WTC11 (cell line): ENCODE measurements at regions of chr11 and their contacts with region 1.

Region 1: GRCh38 chr11:86938900-86939880 is 16.0 kb downstream of the FZD4 start:
- DNase-seq: no peak
- ATAC-seq: peak; percentile 49
- H3K4me3 Mint-ChIP-seq: no peak overlapping the region
- H3K27ac Mint-ChIP-seq: peak overlapping the region; percentile 86; the same call in 1 of the 2 replicates
- H3K4me1 Mint-ChIP-seq: peaks cover 40% of the 10 kb centered on the region
- H3K27me3 Mint-ChIP-seq: no peaks in the 10 kb centered on the region
- CTCF ChIP-seq: peak; percentile 55

Region 2: GRCh38 chr11:86919557-86920210 is 19.5 kb before region 1 on chr11:
- CTCF ChIA-PET with region 1: interaction called, 18 read pairs
- POLR2A ChIA-PET with region 1: no interaction called
- DNase-seq: peak; percentile 15
- ATAC-seq: peak; percentile 66
- H3K4me3 Mint-ChIP-seq: no peak overlapping the region
- H3K27ac Mint-ChIP-seq: peak overlapping the region; percentile 29; the same call in 1 of the 2 replicates
- H3K4me1 Mint-ChIP-seq: peaks cover 29% of the 10 kb centered on the region
- H3K27me3 Mint-ChIP-seq: no peaks in the 10 kb centered on the region; the same call in 1 of the 2 replicates
- CTCF ChIP-seq: peak; percentile 52

Region 3: DNA sequence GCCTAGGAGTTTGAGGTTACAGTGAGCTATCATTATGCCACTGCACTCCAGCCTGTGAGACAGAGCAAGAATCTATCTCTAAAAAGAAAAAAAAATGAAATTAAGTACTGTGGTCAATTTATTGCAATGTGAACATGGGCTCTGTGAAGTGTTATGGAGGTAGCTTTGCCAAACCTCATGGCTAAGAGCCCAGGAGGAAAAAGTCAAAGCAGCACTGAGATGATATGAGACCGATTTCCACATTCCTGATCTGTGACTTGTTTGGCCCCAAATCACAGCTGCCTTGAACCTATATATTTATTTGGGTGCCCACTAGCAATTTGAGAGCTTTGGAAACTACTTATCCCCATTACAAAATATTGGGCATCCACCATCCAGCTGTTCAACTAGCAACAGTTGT is 68.8 kb after region 1 on chr11:
- CTCF ChIA-PET with region 1: no interaction called
- POLR2A ChIA-PET with region 1: no interaction called
- DNase-seq: no peak
- ATAC-seq: no peak
- H3K4me3 Mint-ChIP-seq: no peak overlapping the region
- H3K27ac Mint-ChIP-seq: no peak overlapping the region
- H3K4me1 Mint-ChIP-seq: no peaks in the 10 kb centered on the region
- H3K27me3 Mint-ChIP-seq: no peaks in the 10 kb centered on the region
- CTCF ChIP-seq: no peak

Region 4: DNA sequence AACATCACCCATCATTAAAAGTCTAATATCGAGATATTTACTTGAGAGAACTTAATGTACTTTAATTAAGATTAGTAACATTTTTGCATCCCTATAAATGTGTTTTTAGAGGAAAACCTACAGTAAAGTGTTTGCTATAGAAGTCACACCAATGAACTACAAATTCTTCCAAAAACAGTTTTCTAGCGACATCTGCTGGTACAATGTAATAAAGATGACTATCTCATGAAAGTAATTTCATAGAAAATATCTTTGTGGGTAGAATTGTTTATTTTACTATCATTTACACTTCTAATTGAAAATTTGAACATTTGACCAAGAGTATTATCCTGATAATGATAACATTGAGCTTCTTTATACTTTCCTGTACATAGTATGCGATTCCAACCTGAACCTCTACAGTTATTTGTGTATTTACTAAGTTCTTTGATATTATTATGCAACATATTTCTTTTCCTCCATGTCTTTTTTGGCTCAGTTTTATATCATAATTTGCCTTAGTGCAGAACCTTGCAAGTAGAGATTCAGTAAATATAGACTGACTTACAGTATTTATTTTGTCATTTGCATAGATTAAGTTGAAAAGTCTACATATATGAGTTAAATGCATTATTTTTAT is 351.2 kb after region 1 on chr11:
- CTCF ChIA-PET with region 1: interaction called, 12 read pairs
- POLR2A ChIA-PET with region 1: no interaction called
- DNase-seq: no peak
- ATAC-seq: no peak
- H3K4me3 Mint-ChIP-seq: no peak overlapping the region
- H3K27ac Mint-ChIP-seq: no peak overlapping the region
- H3K4me1 Mint-ChIP-seq: peaks cover 45% of the 10 kb centered on the region
- H3K27me3 Mint-ChIP-seq: no peaks in the 10 kb centered on the region
- CTCF ChIP-seq: peak; percentile 45; the same call in 1 of the 2 replicates

Region 5: GRCh38 chr11:87352759-87353707 is 413.8 kb after region 1 on chr11:
- CTCF ChIA-PET with region 1: interaction called, 10 read pairs
- POLR2A ChIA-PET with region 1: no interaction called
- DNase-seq: peak; percentile 92
- ATAC-seq: peak; percentile 97
- H3K4me3 Mint-ChIP-seq: no peak overlapping the region
- H3K27ac Mint-ChIP-seq: no peak overlapping the region
- H3K4me1 Mint-ChIP-seq: peaks cover 4% of the 10 kb centered on the region
- H3K27me3 Mint-ChIP-seq: no peaks in the 10 kb centered on the region
- CTCF ChIP-seq: peak; percentile 99